ENCODE measurements at regions of chr15 and their contacts with region 1.

Region 1: GRCh38 chr15:73991726-73992593 is at the start of gene STOML1:
- DNase-seq: peak; percentile 96
- H3K4me3 Mint-ChIP-seq: peak within 1 kb of the TSS; percentile 89
- H3K27ac Mint-ChIP-seq: peak within 1 kb of the TSS; percentile 85
- H3K4me1 Mint-ChIP-seq: peaks cover 49% of the 10 kb centered on the region
- H3K27me3 Mint-ChIP-seq: no peaks in the 10 kb centered on the region
- total RNA-seq, gene STOML1: 10.6 and 11.6 TPM in 2 replicates

Region 2: DNA sequence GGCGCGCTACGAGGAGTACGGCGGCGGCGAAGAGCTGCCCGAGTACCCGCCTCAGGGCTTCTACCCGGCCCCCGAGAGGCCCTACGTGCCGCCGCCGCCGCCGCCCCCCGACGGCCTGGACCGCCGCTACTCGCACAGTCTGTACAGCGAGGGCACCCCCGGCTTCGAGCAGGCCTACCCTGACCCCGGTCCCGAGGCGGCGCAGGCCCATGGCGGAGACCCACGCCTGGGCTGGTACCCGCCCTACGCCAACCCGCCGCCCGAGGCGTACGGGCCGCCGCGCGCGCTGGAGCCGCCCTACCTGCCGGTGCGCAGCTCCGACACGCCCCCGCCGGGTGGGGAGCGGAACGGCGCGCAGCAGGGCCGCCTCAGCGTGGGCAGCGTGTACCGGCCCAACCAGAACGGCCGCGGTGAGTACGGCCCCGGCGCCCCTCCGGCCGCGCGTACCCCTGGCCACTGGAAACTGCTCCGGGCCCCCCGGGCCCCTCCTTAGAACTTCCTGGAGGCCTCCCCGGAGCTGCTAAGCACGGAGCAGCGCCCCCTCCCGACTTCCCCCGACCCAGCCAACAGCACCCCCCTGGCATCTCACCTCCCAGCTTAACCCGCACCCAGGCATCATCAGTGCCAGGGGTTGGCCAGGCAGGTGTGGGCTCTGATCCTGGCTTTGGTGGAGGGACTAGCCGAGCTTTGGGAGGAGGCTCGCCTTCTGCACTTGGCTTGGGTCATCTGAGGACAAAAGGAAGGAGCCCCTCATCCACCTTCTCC is 64.3 kb before region 1 on chr15:
- intact Hi-C with region 1: loop called (anchors 2 kb)
- DNase-seq: peak; percentile 68
- H3K4me3 Mint-ChIP-seq: peak overlapping the region; percentile 77
- H3K27ac Mint-ChIP-seq: peak overlapping the region; percentile 11
- H3K4me1 Mint-ChIP-seq: peaks cover 39% of the 10 kb centered on the region
- H3K27me3 Mint-ChIP-seq: peaks cover 9% of the 10 kb centered on the region

Region 3: DNA sequence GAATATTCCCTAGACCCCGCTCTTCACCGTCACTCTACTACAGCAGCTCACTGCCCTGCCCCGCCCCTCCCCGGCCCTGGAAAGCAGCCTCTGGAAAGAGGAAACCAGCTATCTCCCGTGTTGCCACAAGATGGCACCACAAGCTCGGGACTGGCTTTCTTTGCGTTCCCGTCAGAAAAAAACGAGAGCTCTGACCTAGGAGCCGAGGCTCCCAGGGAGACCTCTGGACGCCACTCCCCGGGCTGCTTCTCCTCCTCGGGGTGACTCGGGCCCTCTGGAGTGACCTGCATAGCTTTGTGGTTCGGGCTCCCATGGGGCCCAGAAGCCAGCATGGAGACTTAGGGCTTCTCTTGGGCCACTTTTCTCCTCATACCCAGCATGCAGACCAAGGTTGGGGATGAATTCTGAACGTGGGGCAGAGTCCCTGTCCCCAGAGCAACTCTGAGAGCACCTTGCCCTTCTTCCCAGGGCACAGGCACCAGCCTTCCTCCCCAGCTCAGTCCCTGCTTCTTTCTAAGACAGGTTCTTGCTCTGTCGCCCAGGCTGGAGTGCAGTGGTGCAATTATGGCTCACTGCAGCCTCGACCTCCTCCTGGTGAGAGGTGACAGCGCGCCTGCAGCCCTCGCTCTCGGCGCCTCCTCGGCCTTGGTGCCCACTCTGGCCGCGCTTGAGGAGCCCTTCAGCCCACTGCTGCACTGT is 18.8 kb before region 1 on chr15:
- intact Hi-C with region 1: loop called (anchors 1 kb)
- DNase-seq: peak; percentile 71
- H3K4me3 Mint-ChIP-seq: peak overlapping the region; percentile 30
- H3K27ac Mint-ChIP-seq: no peak overlapping the region
- H3K4me1 Mint-ChIP-seq: peaks cover 38% of the 10 kb centered on the region
- H3K27me3 Mint-ChIP-seq: peaks cover 14% of the 10 kb centered on the region

Region 4: GRCh38 chr15:74044267-74045110 is 52.5 kb after region 1 on chr15:
- intact Hi-C with region 1: loop called (anchors 5 kb)
- DNase-seq: no peak
- H3K4me3 Mint-ChIP-seq: no peak overlapping the region
- H3K27ac Mint-ChIP-seq: no peak overlapping the region
- H3K4me1 Mint-ChIP-seq: peaks cover 10% of the 10 kb centered on the region
- H3K27me3 Mint-ChIP-seq: no peaks in the 10 kb centered on the region

Region 5: DNA sequence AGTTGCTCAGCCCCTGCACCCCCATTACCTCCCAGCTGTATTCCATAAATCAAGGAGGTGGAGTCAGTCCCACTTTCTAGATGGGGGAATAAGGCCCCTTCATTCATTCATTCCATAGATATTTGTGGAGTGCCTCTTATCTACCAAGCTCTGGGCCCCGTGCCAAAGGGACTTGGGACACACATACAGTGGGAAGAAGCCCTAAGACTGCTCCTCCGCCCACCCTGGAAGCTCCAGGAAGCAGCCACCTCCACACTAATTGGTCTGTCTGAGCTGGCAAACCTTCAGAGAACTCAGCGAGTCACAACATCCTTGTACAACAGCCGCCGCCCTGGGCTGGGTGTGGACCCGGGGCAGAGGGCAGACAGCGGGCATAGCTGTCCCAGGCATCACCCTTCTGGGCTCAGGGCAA is 204.2 kb after region 1 on chr15:
- intact Hi-C with region 1: no loop called
- DNase-seq: no peak
- H3K4me3 Mint-ChIP-seq: no peak overlapping the region
- H3K27ac Mint-ChIP-seq: no peak overlapping the region
- H3K4me1 Mint-ChIP-seq: no peaks in the 10 kb centered on the region
- H3K27me3 Mint-ChIP-seq: no peaks in the 10 kb centered on the region

Region 6: GRCh38 chr15:74873036-74873755 is 881.2 kb after region 1 on chr15 and contains the start of gene SCAMP2:
- intact Hi-C with region 1: loop called (anchors 10 kb)
- DNase-seq: peak; percentile 86
- H3K4me3 Mint-ChIP-seq: peak within 1 kb of the TSS; percentile 97
- H3K27ac Mint-ChIP-seq: peak within 1 kb of the TSS; percentile 86
- H3K4me1 Mint-ChIP-seq: peaks cover 34% of the 10 kb centered on the region
- H3K27me3 Mint-ChIP-seq: peaks cover 4% of the 10 kb centered on the region
- total RNA-seq, gene SCAMP2: 93.7 and 103 TPM in 2 replicates